ENCODE measurements at regions of chr2 and their contacts with region 1.

Region 1: DNA sequence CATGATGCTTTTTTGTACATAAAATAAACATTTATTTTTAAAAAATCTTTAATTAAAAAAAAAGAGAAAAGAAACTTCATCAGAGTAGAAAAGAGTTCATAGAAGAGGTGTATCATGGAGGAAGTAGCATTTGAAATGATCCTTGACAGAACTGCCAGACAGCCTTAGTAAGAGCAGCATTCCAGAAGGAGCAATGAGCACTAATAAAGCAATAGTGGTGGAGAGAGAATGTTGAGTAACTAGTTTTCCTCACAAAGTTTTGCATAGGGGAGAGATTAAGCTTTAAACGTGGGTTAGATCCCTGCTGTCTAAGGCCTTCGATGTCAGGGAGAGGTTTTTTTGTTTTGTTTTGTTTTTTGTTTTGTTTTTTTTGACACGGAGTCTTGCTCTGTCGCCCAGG is 29.8 kb upstream of the METTL21A start:
- DNase-seq: no peak
- H3K4me3 ChIP-seq: no peak overlapping the region
- CTCF ChIP-seq: no peak

Region 2: DNA sequence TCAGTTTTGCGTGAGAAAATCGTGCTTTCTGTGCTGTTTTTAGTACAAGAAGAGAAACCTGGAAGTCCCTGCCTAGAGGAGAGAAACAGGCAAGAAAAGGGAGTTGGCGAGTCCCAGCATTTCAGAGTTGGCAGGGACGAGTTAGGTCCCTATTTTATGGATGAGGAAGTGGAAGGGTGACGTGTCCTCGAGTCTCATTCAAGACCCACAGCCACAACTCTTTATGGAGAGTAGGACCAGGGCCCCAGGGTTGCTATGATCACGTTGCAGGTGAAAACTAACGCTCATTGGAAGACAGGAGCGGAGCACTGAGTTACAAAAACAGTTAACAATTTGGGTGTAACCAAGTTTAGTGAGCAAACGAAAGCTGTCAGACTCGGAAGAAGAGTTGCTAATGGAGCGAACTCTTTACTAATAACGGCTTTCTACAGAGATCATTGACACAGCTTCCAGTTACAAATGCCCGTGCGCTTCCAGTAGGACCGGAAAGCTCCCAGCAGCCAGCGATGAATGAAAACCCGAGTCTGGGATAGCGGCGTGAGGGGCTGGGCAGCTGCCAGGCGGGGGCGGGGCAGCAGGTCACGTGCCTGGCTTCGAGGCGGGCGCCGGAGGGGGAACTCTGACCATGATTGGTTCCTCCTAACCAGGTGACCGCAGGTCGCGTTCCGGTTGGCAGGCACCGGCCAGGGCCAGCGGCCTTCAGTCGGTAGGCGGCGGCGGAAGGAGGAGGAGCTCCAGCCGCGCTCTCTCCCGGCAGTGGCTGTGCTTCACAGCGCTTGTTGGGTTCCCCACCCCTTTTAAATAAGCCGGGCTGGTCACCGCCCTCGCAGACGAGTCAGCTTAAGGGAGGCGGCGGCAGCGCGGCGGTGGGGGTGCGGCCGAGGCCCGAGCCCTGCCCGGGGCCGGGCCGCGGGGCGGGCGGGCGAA is 56.1 kb after region 1 on chr2 and contains the start of gene CCNYL1:
- in situ Hi-C with region 1: loop called (anchors 5 kb)
- DNase-seq: peak; percentile 97
- H3K4me3 ChIP-seq: peak within 1 kb of the TSS; percentile 86
- CTCF ChIP-seq: no peak